ENCODE measurements at regions of chrX and their contacts with region 1.

Region 1: GRCh38 chrX:129925305-129926092 is 19.5 kb downstream of the UTP14A start:
- DNase-seq: peak; percentile 69
- H3K4me3 ChIP-seq: no peak overlapping the region
- CTCF ChIP-seq: peak; percentile 58

Region 2: DNA sequence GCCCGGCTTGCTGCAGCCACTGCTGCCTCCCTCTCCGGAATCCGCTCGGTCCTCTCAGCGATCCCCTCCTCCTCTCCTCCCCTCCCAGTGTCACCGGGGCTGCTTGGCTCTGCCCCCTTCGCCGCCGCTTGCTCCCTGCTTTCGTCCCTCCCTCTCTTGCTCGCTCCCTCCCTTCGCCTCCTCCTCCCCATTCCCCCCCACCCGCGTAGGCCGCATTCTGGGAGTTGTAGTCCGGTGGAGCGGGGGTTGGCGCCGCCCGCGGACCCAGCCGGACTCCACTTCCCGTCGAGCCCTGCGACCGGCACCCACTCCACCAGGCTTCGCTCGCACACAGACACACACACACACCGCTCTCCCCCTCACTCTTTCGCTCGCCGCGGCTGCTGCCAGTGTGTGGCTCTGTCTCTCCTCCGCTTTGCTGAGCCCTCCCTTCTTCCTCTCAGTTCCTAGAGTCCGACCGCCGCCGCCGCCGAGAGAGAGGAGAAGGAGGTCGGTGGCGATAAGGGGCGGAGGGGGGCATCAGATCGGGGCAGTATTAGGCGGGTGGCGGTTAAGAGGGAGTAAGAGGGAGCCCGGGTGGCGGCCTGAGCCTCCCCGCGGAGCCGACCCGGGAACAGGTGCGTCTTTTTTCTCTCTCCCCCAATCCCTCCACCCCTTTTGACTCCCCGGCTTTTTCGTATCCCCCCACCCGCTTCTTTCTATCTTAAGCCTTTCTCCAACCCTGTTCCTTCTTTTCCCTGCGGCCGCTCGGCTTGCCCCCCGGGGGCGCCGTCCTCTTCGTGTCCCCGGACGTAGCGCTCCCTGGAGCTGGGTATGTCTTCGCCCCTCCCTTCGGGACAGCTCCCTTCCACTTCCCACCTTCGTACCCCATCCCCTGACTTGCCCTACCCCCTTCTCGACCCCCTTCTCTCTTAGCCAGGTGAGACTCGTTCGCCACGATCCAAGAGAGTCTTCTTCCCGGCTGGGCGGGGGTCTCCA is 57.1 kb after region 1 on chrX and contains the start of gene BCORL1:
- in situ Hi-C with region 1: no loop called
- DNase-seq: peak; percentile 80
- H3K4me3 ChIP-seq: no peak within 1 kb of the TSS
- CTCF ChIP-seq: no peak

Region 3: GRCh38 chrX:130030826-130031225 is 105.3 kb after region 1 on chrX:
- in situ Hi-C with region 1: loop called (anchors 5 kb)
- DNase-seq: no peak
- H3K4me3 ChIP-seq: no peak overlapping the region
- CTCF ChIP-seq: no peak